WTC11 (cell line): ENCODE measurements at regions of chr1 and their contacts with region 1.

Region 1: GRCh38 chr1:204398217-204399081 is 13.2 kb downstream of the PPP1R15B start:
- DNase-seq: peak; percentile 81
- ATAC-seq: peak; percentile 100
- H3K4me3 Mint-ChIP-seq: no peak overlapping the region
- H3K27ac Mint-ChIP-seq: no peak overlapping the region
- H3K4me1 Mint-ChIP-seq: no peaks in the 10 kb centered on the region
- H3K27me3 Mint-ChIP-seq: no peaks in the 10 kb centered on the region; the same call in 1 of the 2 replicates
- CTCF ChIP-seq: peak; percentile 72

Region 2: DNA sequence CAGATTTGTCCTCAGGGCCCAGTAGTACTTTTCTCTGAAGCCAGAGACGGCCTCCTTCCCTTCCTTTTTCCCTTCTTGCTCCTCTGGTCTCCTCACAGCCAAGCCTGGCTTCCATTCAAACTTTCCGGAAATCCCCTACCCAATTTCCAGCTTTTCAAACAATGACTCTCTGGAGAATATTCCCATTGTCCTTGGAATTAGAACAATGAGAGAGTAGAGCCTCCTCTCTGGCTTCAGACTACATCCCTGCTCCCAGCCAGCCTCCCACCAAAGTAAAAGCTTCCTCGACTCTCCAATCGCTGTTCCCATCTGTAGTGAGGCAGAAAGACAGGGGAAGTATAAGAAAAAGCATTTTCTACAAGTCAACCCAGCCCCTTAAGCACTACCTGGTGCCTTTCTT is 403.2 kb before region 1 on chr1:
- CTCF ChIA-PET with region 1: no interaction called
- POLR2A ChIA-PET with region 1: no interaction called
- DNase-seq: no peak
- ATAC-seq: no peak
- H3K4me3 Mint-ChIP-seq: no peak overlapping the region
- H3K27ac Mint-ChIP-seq: no peak overlapping the region
- H3K4me1 Mint-ChIP-seq: peaks cover 48% of the 10 kb centered on the region
- H3K27me3 Mint-ChIP-seq: peaks cover 32% of the 10 kb centered on the region
- CTCF ChIP-seq: no peak

Region 3: GRCh38 chr1:204162231-204163074 is 236.0 kb before region 1 on chr1:
- CTCF ChIA-PET with region 1: interaction called, 54 read pairs
- POLR2A ChIA-PET with region 1: interaction called, 3 read pairs
- DNase-seq: peak; percentile 94
- ATAC-seq: peak; percentile 98
- H3K4me3 Mint-ChIP-seq: no peak overlapping the region
- H3K27ac Mint-ChIP-seq: no peak overlapping the region
- H3K4me1 Mint-ChIP-seq: peaks cover 2% of the 10 kb centered on the region; the same call in 1 of the 2 replicates
- H3K27me3 Mint-ChIP-seq: peaks cover 8% of the 10 kb centered on the region
- CTCF ChIP-seq: peak; percentile 99

Region 4: DNA sequence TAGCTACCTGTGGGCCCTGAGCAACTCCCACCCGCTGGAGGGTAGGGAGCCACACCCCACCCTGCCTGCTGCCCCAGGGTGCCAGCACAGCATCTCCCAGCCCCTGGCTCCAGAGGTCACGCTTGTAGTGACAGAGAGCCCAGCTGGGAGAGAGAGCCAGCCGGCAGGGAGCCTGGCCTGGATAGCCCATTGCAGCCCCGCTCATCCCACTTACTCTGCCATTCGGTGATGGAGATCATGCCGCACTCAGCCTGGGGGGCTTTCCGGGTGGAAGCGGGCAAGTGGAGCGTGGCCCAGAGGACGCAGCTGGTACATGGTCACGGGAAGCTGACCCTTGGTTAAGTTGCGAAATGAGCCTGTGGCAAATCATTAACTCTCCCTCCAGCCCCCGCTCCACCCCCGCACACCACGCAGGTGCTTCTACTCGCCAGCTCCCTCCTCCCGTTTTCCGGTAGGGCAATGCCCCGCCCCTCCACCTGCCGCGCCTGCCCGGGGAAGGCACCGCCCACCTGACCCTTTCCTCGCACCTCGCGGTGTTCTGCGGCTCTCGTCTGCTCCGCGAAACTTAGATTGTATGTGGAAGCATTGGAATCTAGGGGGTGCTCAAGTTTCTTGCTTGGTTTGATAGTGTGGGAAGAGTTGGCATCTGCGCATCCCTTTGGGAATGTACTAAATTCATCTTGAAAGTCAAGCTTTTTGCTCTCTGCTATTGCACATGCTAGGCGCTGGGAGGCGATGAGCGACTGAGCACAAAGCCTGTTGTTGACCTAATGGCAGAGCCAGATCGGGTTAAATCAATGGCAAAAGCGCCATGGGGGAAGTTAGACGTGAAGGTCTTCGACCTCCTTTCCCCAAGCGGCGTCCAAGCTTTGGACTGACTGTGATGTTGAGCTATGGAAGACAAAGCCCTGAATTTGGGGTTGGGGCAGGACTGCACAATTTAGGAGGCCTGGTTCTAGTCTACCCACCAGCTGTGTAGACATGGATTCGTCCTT is 184.5 kb before region 1 on chr1 and contains the start of gene GOLT1A:
- CTCF ChIA-PET with region 1: interaction called, 38 read pairs
- POLR2A ChIA-PET with region 1: interaction called, 6 read pairs
- DNase-seq: peak; percentile 93
- ATAC-seq: peak; percentile 96
- H3K4me3 Mint-ChIP-seq: peak within 1 kb of the TSS; percentile 69
- H3K27ac Mint-ChIP-seq: peak within 1 kb of the TSS; percentile 93
- H3K4me1 Mint-ChIP-seq: peaks cover 6% of the 10 kb centered on the region
- H3K27me3 Mint-ChIP-seq: no peaks in the 10 kb centered on the region
- CTCF ChIP-seq: peak; percentile 47; the same call in 1 of the 2 replicates
- total RNA-seq, gene GOLT1A: 6.5 to 6.7 TPM (median 6.6 TPM) in 3 replicates

Region 5: GRCh38 chr1:204363335-204364124 is 34.9 kb before region 1 on chr1:
- CTCF ChIA-PET with region 1: interaction called, 37 read pairs
- POLR2A ChIA-PET with region 1: interaction called, 4 read pairs
- DNase-seq: peak; percentile 73
- ATAC-seq: peak; percentile 43
- H3K4me3 Mint-ChIP-seq: peak overlapping the region; percentile 56
- H3K27ac Mint-ChIP-seq: no peak overlapping the region
- H3K4me1 Mint-ChIP-seq: peaks cover 19% of the 10 kb centered on the region
- H3K27me3 Mint-ChIP-seq: peaks cover 20% of the 10 kb centered on the region
- CTCF ChIP-seq: peak; percentile 98

Region 6: GRCh38 chr1:204411451-204412204 is 13.2 kb after region 1 on chr1 and contains the start of gene PPP1R15B:
- CTCF ChIA-PET with region 1: interaction called, 47 read pairs
- POLR2A ChIA-PET with region 1: interaction called, 4 read pairs
- DNase-seq: peak; percentile 97
- ATAC-seq: peak; percentile 93
- H3K4me3 Mint-ChIP-seq: peak within 1 kb of the TSS; percentile 100
- H3K27ac Mint-ChIP-seq: peak within 1 kb of the TSS; percentile 100
- H3K4me1 Mint-ChIP-seq: peaks cover 12% of the 10 kb centered on the region
- H3K27me3 Mint-ChIP-seq: no peaks in the 10 kb centered on the region
- CTCF ChIP-seq: no peak
- total RNA-seq, gene PPP1R15B: 43.7 to 47.7 TPM (median 44.6 TPM) in 3 replicates

Region 7: GRCh38 chr1:204494281-204495077 is 96.0 kb after region 1 on chr1 and contains the start of gene PIK3C2B:
- CTCF ChIA-PET with region 1: interaction called, 24 read pairs
- POLR2A ChIA-PET with region 1: interaction called, 4 read pairs
- DNase-seq: peak; percentile 86
- ATAC-seq: peak; percentile 91
- H3K4me3 Mint-ChIP-seq: peak within 1 kb of the TSS; percentile 93
- H3K27ac Mint-ChIP-seq: peak within 1 kb of the TSS; percentile 64
- H3K4me1 Mint-ChIP-seq: peaks cover 33% of the 10 kb centered on the region
- H3K27me3 Mint-ChIP-seq: peaks cover 5% of the 10 kb centered on the region
- CTCF ChIP-seq: no peak
- total RNA-seq, gene PIK3C2B: 20.8 to 27.7 TPM (median 22.6 TPM) in 3 replicates

Region 8: DNA sequence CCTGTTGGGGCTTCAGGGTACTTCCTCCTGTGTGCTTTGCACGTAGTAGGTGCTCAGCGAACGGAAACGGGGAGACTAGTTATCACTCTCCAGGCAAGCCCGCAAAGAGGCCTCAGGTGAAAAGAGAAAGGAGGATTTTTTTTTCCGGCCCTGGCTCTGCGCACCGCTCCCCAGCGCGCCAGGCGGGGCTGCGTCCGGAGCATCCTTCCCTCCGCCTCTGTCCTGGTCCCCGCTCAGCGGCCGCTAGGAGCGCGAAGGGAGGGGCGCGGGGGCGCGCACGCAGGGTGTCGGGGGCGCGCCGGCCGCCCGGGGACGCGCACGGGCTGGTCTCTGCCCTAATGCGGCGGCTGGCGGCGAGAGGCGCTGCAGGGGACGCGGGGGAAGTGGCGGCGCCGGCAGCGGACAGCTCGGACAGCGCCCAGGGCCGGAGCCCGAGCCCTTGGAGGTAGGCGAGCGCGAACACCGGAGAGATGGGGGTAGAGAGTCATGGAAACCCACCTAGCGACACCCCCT is 429.9 kb after region 1 on chr1:
- CTCF ChIA-PET with region 1: no interaction called
- POLR2A ChIA-PET with region 1: no interaction called
- DNase-seq: peak; percentile 88
- ATAC-seq: peak; percentile 82
- H3K4me3 Mint-ChIP-seq: peak overlapping the region; percentile 73
- H3K27ac Mint-ChIP-seq: no peak overlapping the region
- H3K4me1 Mint-ChIP-seq: peaks cover 34% of the 10 kb centered on the region
- H3K27me3 Mint-ChIP-seq: peaks cover 22% of the 10 kb centered on the region
- CTCF ChIP-seq: no peak